Activated CD4-positive, alpha-beta T cell treated with anti-CD3 and anti-CD28 coated beads for 36 hours (primary cell): ENCODE measurements at regions of chr17 and their contacts with region 1.

Region 1: DNA sequence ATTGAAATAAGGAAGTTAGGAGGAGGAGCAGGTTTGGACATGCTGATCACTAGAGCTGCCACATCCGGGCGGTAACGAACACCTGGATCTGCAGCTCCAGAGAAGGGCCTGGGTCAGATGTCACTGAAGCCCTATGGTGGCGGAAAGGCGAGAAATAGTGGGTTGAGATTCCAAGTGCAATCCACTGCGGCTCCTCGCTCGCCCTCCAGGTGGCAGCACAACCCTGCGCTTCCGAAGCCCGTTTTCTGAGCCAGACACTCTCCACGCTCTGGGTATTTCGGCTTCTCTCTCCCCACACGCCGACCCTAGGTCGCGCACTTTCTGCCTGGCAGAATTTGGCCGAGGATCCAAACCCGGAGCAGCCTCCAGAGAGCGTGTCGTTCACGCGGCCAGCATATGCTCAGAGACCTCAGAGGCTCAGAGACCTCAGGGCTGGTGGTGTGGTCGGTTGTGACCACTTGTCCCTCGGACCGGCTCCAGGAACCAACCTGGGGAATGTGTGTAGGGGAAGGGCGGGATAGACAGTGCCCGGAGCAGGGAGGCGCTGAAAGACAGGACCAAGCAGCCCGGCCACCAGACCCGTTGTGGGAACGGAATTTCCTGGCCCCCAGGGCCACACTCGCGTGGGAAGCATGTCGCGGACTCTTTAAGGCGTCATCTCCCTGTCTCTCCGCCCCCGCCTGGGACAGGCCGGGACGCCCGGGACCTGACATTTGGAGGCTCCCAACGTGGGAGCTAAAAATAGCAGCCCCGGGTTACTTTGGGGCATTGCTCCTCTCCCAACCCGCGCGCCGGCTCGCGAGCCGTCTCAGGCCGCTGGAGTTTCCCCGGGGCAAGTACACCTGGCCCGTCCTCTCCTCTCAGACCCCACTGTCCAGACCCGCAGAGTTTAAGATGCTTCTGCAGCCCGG is 744 bp upstream of the SLC2A4 start:
- DNase-seq: peak; percentile 92
- ATAC-seq: peak; percentile 84
- H3K4me3 Mint-ChIP-seq: peak overlapping the region; percentile 70
- H3K27ac Mint-ChIP-seq: no peak overlapping the region
- H3K4me1 Mint-ChIP-seq: peaks cover 21% of the 10 kb centered on the region
- H3K27me3 Mint-ChIP-seq: peaks cover 17% of the 10 kb centered on the region

Region 2: DNA sequence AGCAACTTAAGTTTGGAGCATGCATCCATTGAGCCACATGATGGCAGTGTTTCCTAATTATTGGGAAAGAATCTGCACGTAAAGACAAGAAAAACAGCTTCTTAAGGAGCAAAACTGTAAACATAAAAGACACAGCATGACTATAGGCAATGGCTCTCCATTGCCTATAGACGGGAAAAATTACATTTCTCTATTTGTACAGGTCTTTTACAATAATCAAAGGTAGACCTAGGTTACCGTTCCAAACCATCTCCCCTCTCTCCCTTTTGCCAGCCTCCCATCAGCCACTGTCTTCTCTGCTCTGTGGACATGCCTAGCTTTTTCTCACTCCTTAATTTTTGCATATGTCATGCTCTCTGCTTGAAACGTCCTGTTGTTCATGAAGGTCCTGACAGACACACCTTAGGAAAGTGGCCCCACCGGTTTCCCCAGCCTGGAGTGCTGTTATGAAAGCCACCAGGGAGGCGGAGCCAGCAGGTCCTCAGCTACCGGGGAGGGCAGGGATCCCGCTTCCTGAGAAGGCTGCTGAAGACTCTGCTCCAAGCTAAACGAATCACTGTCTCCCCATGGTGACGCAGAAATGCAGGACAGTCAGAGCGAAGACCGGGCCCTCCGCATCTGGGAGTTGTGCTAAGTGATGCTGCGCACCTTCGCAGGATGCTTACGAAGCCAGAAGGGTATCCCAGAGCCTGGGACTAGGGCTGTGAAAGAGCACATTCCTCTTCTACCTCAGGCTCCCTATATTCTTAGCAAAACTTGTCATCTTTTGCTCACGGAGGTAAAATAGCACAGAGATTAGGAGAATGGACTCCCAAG is 234.7 kb before region 1 on chr17:
- CTCF ChIA-PET with region 1: interaction called, 4 read pairs
- POLR2A ChIA-PET with region 1: no interaction called
- intact Hi-C with region 1: loop called in 1 of 2 experiments (anchors 1 kb)
- DNase-seq: peak; percentile 66
- ATAC-seq: peak; percentile 34
- H3K4me3 Mint-ChIP-seq: peak overlapping the region; percentile 68
- H3K27ac Mint-ChIP-seq: peak overlapping the region; percentile 59
- H3K4me1 Mint-ChIP-seq: peaks cover 37% of the 10 kb centered on the region
- H3K27me3 Mint-ChIP-seq: peaks cover 3% of the 10 kb centered on the region

Region 3: GRCh38 chr17:7239091-7240027 is 41.4 kb before region 1 on chr17 and contains the start of gene PHF23:
- CTCF ChIA-PET with region 1: interaction called, 3 read pairs
- POLR2A ChIA-PET with region 1: no interaction called
- intact Hi-C with region 1: loop called in 1 of 2 experiments (anchors 1 kb)
- DNase-seq: peak; percentile 99
- ATAC-seq: peak; percentile 74
- H3K4me3 Mint-ChIP-seq: peak within 1 kb of the TSS; percentile 97
- H3K27ac Mint-ChIP-seq: peak within 1 kb of the TSS; percentile 93
- H3K4me1 Mint-ChIP-seq: peaks cover 61% of the 10 kb centered on the region
- H3K27me3 Mint-ChIP-seq: no peaks in the 10 kb centered on the region
- total RNA-seq, gene PHF23: 23.6 to 35.2 TPM

Region 4: GRCh38 chr17:7306911-7307686 is 26.3 kb after region 1 on chr17 and contains the start of gene EIF5A:
- CTCF ChIA-PET with region 1: interaction called, 5 read pairs
- POLR2A ChIA-PET with region 1: no interaction called
- intact Hi-C with region 1: loop called (anchors 1 kb)
- DNase-seq: peak; percentile 100
- ATAC-seq: peak; percentile 86
- H3K4me3 Mint-ChIP-seq: peak within 1 kb of the TSS; percentile 96
- H3K27ac Mint-ChIP-seq: peak within 1 kb of the TSS; percentile 100
- H3K4me1 Mint-ChIP-seq: peaks cover 36% of the 10 kb centered on the region
- H3K27me3 Mint-ChIP-seq: no peaks in the 10 kb centered on the region
- total RNA-seq, gene EIF5A: 780 to 934 TPM

Region 5: GRCh38 chr17:7351665-7352501 is 71.1 kb after region 1 on chr17 and contains the start of gene KCTD11:
- CTCF ChIA-PET with region 1: interaction called, 6 read pairs
- POLR2A ChIA-PET with region 1: no interaction called
- intact Hi-C with region 1: loop called in 1 of 2 experiments (anchors 2 kb)
- DNase-seq: peak; percentile 90
- ATAC-seq: peak; percentile 58
- H3K4me3 Mint-ChIP-seq: peak within 1 kb of the TSS; percentile 79
- H3K27ac Mint-ChIP-seq: peak within 1 kb of the TSS; percentile 84
- H3K4me1 Mint-ChIP-seq: peaks cover 55% of the 10 kb centered on the region
- H3K27me3 Mint-ChIP-seq: no peaks in the 10 kb centered on the region
- total RNA-seq, gene KCTD11: 5.0 to 6.1 TPM

Region 6: GRCh38 chr17:7363311-7363710 is 82.5 kb after region 1 on chr17:
- CTCF ChIA-PET with region 1: no interaction called
- POLR2A ChIA-PET with region 1: no interaction called
- intact Hi-C with region 1: no loop called
- DNase-seq: no peak
- ATAC-seq: no peak
- H3K4me3 Mint-ChIP-seq: no peak overlapping the region
- H3K27ac Mint-ChIP-seq: no peak overlapping the region
- H3K4me1 Mint-ChIP-seq: no peaks in the 10 kb centered on the region
- H3K27me3 Mint-ChIP-seq: no peaks in the 10 kb centered on the region

Region 7: DNA sequence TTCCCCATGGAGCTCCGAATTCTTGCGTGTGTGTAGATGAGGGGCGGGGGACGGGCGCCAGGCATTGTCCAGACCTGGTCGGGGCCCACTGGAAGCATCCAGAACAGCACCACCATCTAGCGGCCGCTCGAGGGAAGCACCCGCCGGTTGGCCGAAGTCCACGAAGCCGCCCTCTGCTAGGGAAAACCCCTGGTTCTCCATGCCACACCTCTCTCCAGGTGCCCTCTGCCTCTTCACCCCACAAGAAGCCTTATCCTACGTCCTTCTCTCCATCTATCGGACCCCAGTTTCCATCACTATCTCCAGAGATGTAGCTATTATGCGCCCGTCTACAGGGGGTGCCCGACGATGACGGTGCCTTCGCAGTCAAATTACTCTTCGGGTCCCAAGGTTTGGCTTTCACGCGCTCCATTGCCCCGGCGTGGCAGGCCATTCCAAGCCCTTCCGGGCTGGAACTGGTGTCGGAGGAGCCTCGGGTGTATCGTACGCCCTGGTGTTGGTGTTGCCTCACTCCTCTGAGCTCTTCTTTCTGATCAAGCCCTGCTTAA is 280.3 kb after region 1 on chr17:
- CTCF ChIA-PET with region 1: interaction called, 4 read pairs
- POLR2A ChIA-PET with region 1: no interaction called
- intact Hi-C with region 1: loop called in 1 of 2 experiments (anchors 1 kb)
- DNase-seq: peak; percentile 92
- ATAC-seq: peak; percentile 75
- H3K4me3 Mint-ChIP-seq: peak overlapping the region; percentile 79
- H3K27ac Mint-ChIP-seq: peak overlapping the region; percentile 87
- H3K4me1 Mint-ChIP-seq: peaks cover 46% of the 10 kb centered on the region
- H3K27me3 Mint-ChIP-seq: no peaks in the 10 kb centered on the region